B cell (primary cell): ENCODE measurements at regions of chr1 and their contacts with region 1.

Region 1: DNA sequence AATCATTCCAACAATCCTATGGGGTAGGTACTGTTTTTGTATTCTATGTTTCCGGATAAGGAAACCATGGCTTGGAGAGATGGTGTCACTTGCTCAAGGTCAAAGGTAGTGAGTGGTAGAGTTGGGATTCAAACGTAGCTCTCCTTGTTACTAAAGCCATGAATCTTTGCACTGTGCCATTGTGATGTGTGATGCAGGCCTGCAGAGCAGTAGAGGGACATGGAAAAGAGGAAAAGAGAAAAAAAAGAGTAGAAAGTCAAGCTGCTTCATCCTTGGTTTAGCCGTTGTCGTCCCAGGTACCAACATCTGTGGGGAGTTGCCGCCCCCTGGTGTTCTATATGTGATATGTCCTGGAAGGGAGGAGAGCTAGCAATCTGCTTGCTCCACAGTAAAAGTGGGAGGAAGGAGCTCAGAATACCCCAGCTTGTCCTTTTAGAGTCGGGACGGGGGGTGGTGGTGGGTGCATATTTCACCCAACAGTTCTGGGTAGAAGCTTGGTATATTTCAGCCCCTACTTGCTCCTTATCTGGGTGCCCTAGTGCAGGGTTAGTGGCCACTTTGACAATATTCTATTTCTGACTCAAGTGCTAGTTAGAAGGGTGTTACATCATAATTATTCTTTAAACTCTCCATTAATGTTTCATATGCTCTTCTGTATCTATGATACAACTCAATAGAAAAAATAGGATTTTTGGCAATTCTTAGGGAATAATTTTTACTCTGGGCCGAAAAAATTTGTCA is 98.4 kb downstream of the EBNA1BP2 start:
- DNase-seq: peak; percentile 85
- ATAC-seq: peak; percentile 86
- H3K4me3 ChIP-seq: no peak overlapping the region
- H3K4me3 Mint-ChIP-seq: peak overlapping the region; percentile 71
- H3K27ac ChIP-seq: peak overlapping the region in 1 of 2 donors; percentile 11
- H3K27ac Mint-ChIP-seq: peak overlapping the region; percentile 83
- H3K4me1 ChIP-seq: peaks cover 18 to 19% of the 10 kb centered on the region in 2 donors
- H3K4me1 Mint-ChIP-seq: peaks cover 37% of the 10 kb centered on the region
- H3K27me3 ChIP-seq: peaks cover 0 to 2% (median 0%) of the 10 kb centered on the region in 4 experiments
- H3K27me3 Mint-ChIP-seq: no peaks in the 10 kb centered on the region
- CTCF ChIP-seq: peak; percentile 90

Region 2: GRCh38 chr1:42335050-42335808 is 738.4 kb before region 1 on chr1 and contains the start of gene FOXJ3:
- CTCF ChIA-PET with region 1: interaction called, 4 read pairs
- POLR2A ChIA-PET with region 1: no interaction called
- intact Hi-C with region 1: loop called (anchors 10 kb)
- DNase-seq: peak; percentile 97
- ATAC-seq: peak; percentile 90
- H3K4me3 ChIP-seq: peak within 1 kb of the TSS; percentile 63 to 97 (median 89)
- H3K4me3 Mint-ChIP-seq: peak within 1 kb of the TSS; percentile 95
- H3K27ac ChIP-seq: peak within 1 kb of the TSS; percentile 75 to 91
- H3K27ac Mint-ChIP-seq: peak within 1 kb of the TSS; percentile 90
- H3K4me1 ChIP-seq: peaks cover 20 to 24% of the 10 kb centered on the region in 2 donors
- H3K4me1 Mint-ChIP-seq: peaks cover 44% of the 10 kb centered on the region
- H3K27me3 ChIP-seq: no peaks in the 10 kb centered on the region
- H3K27me3 Mint-ChIP-seq: no peaks in the 10 kb centered on the region
- CTCF ChIP-seq: no peak
- total RNA-seq, gene FOXJ3: 76.4 and 80.3 TPM in 2 replicates

Region 3: DNA sequence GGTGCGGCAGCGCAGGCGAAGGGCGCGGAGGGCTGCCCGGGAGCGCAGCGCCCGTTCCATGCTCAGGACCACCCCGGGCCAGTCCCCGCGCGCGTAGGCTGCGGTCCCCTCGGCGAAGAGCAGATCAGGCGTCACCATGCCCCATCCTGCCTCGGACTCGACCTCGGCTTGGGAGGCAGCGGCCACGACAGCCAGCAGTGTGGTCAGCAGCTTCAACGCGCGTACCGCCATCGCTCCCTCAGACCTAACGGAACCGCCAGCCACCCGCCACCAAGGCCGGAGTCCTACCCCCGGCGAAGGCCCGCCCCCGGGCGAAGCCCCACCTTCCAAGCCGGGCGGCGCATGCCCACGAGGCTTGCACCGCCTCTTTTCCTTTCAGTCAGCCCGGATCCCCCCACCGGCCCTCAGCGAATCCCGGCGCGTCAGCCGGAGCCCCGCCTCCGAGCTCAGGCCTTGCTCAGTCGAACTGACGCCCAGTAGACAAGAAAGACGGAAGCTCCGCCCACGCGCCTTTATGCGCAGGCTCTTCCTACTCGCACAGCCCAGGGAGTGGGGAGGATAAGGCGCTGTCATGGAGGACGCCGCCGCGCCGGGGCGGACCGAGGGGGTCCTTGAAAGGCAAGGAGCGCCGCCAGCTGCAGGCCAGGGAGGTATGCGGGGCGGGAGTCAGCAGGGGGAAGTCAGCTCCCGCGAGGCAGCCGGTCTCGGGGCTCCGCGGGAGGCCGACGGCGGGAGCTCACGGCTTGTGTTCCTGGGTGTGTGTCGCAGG is 306.7 kb before region 1 on chr1 and contains the starts of genes C1orf50 and P3H1:
- CTCF ChIA-PET with region 1: interaction called, 27 read pairs
- POLR2A ChIA-PET with region 1: no interaction called
- intact Hi-C with region 1: no loop called
- DNase-seq: peak; percentile 100
- ATAC-seq: peak; percentile 92
- H3K4me3 ChIP-seq: peak within 1 kb of the TSS; percentile 71 to 92 (median 76)
- H3K4me3 Mint-ChIP-seq: no peak within 1 kb of the TSS
- H3K27ac ChIP-seq: peak within 1 kb of the TSS; percentile 53 to 83
- H3K27ac Mint-ChIP-seq: peak within 1 kb of the TSS; percentile 98
- H3K4me1 ChIP-seq: peaks cover 27 to 31% of the 10 kb centered on the region in 2 donors
- H3K4me1 Mint-ChIP-seq: peaks cover 24% of the 10 kb centered on the region
- H3K27me3 ChIP-seq: no peaks in the 10 kb centered on the region
- H3K27me3 Mint-ChIP-seq: no peaks in the 10 kb centered on the region
- CTCF ChIP-seq: no peak
- total RNA-seq, gene C1orf50: 13.1 and 17.1 TPM in 2 replicates
- total RNA-seq, gene P3H1: 42.2 and 46.1 TPM in 2 replicates

Region 4: DNA sequence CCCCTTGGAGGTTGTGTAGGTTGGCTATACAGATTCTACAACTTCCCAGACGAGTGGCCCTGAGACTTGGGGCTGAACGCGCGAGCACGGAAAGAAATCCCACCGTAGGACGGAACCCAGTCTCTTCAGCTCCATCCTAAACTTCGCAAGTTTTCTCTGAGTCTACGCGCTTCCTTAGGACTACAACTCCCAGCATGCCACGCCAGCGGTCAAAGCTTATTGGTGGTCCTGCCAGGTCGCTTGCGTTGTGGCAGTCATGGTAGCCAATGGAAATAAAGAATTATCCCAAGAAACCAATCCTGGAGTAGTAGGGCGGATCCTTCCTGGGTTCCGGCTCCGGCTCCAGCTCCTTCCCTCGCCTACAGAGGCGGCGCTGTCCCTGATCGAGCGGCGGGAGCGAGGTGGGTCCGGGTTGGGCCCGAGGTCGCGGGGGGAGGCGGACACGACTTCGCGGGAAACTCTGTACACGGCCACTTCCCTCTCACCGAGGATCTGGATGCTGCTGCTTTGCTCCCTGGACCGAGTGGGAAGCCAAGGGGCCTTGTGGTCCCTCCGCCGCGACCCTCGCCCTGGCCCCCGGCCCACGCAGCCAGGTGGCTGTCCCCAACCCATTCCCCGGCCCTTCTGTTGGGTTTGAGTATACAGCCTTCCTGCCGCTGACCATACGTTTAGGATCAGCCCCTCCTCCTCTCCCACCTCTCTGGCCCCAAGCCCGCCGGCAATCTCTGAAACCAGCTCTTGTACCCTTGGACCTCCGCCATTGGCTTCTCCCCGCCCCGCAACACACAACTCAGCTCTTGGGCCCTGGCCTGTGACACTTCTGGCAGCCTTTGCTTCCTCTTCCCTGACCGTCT is 227.2 kb before region 1 on chr1 and contains the start of gene ZNF691:
- CTCF ChIA-PET with region 1: interaction called, 27 read pairs
- POLR2A ChIA-PET with region 1: interaction called, 3 read pairs
- intact Hi-C with region 1: no loop called
- DNase-seq: peak; percentile 93
- ATAC-seq: peak; percentile 98
- H3K4me3 ChIP-seq: peak within 1 kb of the TSS; percentile 80 to 92 (median 90)
- H3K4me3 Mint-ChIP-seq: peak within 1 kb of the TSS; percentile 95
- H3K27ac ChIP-seq: peak within 1 kb of the TSS; percentile 41 to 76
- H3K27ac Mint-ChIP-seq: peak within 1 kb of the TSS; percentile 91
- H3K4me1 ChIP-seq: peaks cover 17 to 24% of the 10 kb centered on the region in 2 donors
- H3K4me1 Mint-ChIP-seq: peaks cover 46% of the 10 kb centered on the region
- H3K27me3 ChIP-seq: no peaks in the 10 kb centered on the region
- H3K27me3 Mint-ChIP-seq: no peaks in the 10 kb centered on the region
- CTCF ChIP-seq: peak; percentile 16
- total RNA-seq, gene ZNF691: 17.1 and 18.4 TPM in 2 replicates

Region 5: DNA sequence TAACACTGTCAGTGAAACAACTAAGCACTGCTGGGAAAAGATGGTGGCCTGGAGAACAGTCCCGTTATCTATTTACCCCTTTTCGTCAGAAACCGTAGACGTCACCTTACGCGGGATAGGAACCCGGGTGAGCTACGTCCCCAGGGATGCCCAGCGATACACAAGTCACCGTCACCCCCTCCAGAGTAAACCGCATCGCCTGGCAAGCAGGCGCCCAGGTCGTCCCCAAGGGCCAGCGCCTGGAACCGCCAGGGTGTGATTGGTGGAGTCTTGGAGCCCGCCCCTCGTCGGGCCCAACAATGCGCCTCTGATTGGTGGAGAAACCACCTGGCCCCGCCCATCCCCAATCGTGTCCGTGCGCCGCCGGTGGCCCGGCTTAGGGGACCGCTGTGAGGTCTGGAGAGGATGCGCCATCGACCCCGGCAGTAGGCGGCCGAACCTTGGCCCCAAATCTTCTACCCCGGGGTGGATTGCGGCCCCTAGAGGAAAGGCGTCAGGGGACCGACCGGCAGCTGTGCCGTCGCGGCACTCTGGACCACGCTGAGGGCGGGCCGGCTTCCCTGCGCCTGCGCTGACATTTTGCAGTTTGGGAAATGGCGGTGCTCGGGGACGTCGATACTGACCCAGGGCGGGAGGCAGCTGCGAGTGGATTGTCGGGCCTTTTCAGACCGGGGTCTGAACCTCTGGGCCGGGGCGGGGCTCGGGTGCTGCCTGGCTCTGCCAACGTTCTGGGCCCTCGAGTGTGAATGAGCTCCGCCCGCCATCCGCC is 149.4 kb before region 1 on chr1:
- CTCF ChIA-PET with region 1: interaction called, 1,178 read pairs
- POLR2A ChIA-PET with region 1: interaction called, 44 read pairs
- intact Hi-C with region 1: loop called (anchors 1 kb)
- DNase-seq: peak; percentile 97
- ATAC-seq: peak; percentile 86
- H3K4me3 ChIP-seq: peak overlapping the region; percentile 48 to 83 (median 80)
- H3K4me3 Mint-ChIP-seq: peak overlapping the region; percentile 86
- H3K27ac ChIP-seq: peak overlapping the region; percentile 96 to 98
- H3K27ac Mint-ChIP-seq: peak overlapping the region; percentile 92
- H3K4me1 ChIP-seq: peaks cover 23% of the 10 kb centered on the region in 2 donors
- H3K4me1 Mint-ChIP-seq: peaks cover 43% of the 10 kb centered on the region
- H3K27me3 ChIP-seq: no peaks in the 10 kb centered on the region
- H3K27me3 Mint-ChIP-seq: no peaks in the 10 kb centered on the region
- CTCF ChIP-seq: no peak

Region 6: GRCh38 chr1:42941640-42942330 is 131.9 kb before region 1 on chr1:
- CTCF ChIA-PET with region 1: interaction called, 12 read pairs
- POLR2A ChIA-PET with region 1: no interaction called
- intact Hi-C with region 1: no loop called
- DNase-seq: peak; percentile 13
- ATAC-seq: no peak
- H3K4me3 ChIP-seq: no peak overlapping the region
- H3K4me3 Mint-ChIP-seq: no peak overlapping the region
- H3K27ac ChIP-seq: peak overlapping the region; percentile 66 to 76
- H3K27ac Mint-ChIP-seq: peak overlapping the region; percentile 92
- H3K4me1 ChIP-seq: peaks cover 98 to 100% of the 10 kb centered on the region in 2 donors
- H3K4me1 Mint-ChIP-seq: peaks cover 96% of the 10 kb centered on the region
- H3K27me3 ChIP-seq: no peaks in the 10 kb centered on the region
- H3K27me3 Mint-ChIP-seq: no peaks in the 10 kb centered on the region
- CTCF ChIP-seq: no peak

Region 7: GRCh38 chr1:42973304-42973703 is 100.4 kb before region 1 on chr1:
- CTCF ChIA-PET with region 1: interaction called, 14 read pairs
- POLR2A ChIA-PET with region 1: no interaction called
- intact Hi-C with region 1: no loop called
- DNase-seq: no peak
- ATAC-seq: no peak
- H3K4me3 ChIP-seq: no peak overlapping the region
- H3K4me3 Mint-ChIP-seq: no peak overlapping the region
- H3K27ac ChIP-seq: no peak overlapping the region
- H3K27ac Mint-ChIP-seq: no peak overlapping the region
- H3K4me1 ChIP-seq: no peaks in the 10 kb centered on the region
- H3K4me1 Mint-ChIP-seq: no peaks in the 10 kb centered on the region
- H3K27me3 ChIP-seq: no peaks in the 10 kb centered on the region
- H3K27me3 Mint-ChIP-seq: no peaks in the 10 kb centered on the region
- CTCF ChIP-seq: no peak